Cardiac septum (tissue), 1 donor: ENCODE measurements at regions of chr4 and their contacts with region 1.

Region 1: GRCh38 chr4:139919521-139919920 is 234.5 kb downstream of the MAML3 start:
- DNase-seq: no peak

Region 2: GRCh38 chr4:139330283-139330682 is 589.2 kb before region 1 on chr4:
- intact Hi-C with region 1: no loop called
- DNase-seq: no peak

Region 3: DNA sequence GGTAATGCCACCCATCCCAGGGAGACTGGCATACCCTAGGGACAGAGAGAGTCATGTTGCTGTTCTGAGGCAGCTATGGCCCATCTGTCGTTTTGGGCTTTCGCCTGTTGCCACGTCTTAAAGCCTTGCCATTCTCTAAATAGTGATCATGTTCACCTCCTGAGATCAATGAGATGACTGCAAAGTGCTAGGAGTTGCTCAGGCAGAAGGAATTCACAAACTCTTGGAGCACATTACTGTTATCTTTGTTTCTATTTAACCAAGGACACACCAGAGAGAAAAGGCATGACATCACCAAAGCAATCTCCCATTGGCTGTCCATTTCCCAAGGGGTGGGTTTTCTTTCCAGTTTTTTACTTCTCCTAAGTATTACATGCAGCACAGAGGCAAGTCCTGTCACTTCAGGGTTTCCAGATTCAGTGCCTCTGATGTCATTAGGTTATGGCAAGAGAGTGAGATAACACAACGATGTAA is 326.4 kb before region 1 on chr4:
- intact Hi-C with region 1: no loop called
- DNase-seq: no peak

Region 4: GRCh38 chr4:139815778-139816601 is 103.5 kb before region 1 on chr4:
- intact Hi-C with region 1: loop called (anchors 5 kb)
- DNase-seq: no peak

Region 5: DNA sequence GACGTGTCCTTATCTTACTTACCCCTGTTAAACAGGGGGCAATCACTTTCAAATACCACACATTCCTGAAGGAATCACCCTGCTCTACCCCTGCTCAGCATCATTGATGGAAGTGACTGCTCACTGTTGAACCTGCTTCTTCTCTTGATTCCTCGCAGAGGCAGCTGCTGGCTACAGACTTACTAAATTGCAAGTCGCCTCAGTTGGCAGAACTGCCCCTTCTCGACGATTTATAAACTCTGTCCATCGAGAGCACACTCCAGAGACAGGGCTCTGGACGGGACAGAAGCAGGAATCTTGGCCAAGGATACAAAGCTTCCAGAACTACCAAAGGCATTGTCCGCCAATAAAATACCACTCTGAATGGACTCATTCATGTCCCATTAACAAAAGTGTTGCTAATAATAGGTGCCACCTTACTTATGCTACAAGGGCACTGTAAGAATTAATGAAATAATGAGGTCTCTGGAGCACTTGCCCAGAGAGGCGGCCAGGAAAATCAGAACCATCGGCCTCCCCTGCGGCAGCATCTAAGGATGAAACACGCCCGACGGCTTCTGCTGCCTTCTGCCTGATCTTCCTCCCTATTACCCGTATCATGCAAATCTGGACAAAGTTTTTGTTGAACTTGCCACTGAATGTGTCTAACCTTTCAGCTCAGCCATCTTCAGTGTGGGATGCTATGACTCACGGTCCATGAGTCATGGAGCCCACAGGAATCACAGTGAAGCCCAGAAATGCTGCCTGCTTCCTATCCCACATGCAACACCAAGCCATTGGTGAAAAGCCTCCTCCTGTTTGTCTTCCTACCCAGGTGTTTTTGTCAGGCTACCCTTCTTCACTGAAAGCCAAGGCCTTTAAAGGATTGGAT is 69.6 kb after region 1 on chr4:
- intact Hi-C with region 1: loop called (anchors 5 kb)
- DNase-seq: no peak

Region 6: GRCh38 chr4:140004549-140004895 is 85.0 kb after region 1 on chr4:
- intact Hi-C with region 1: no loop called
- DNase-seq: peak; percentile 82

Region 7: DNA sequence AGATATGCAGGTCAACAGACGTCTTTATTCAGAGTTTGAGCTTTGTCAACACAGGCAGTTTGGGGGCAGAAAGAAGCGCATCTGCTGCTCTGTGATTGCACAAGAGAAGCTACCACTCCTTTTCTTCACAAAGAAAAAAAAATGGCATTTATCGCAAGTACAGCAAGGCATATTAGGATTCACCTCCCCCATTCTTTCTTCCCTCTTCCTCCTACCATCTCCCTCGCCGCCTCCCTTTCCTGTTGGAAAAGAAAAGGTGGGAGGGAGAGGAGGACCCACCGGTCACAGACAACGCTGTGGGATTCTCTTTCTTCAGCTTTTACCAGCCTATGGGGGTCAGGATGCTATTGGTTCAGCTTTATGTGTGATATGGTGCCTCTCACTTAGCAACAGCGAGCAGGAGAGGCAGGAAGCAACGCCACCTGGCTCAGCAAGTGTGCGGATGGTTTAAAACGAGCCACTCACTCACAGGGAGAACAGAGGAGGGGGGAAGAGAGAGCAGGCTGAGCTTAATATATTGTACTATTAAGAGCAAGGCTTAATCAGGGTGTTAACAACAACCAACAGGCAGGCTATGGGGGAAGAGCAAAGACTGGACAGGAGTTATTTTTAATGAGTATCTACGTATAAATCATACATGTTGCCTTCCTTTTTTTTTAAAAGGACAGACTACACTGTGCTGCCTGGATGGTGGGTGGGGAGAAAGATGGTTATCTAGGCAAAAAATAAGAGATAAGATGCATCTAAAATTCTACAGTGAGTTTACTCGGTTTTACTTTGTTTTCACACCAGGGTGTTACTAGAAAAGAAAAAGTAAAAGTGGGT is 129.7 kb after region 1 on chr4:
- intact Hi-C with region 1: loop called (anchors 5 kb)
- DNase-seq: peak; percentile 79

Region 8: DNA sequence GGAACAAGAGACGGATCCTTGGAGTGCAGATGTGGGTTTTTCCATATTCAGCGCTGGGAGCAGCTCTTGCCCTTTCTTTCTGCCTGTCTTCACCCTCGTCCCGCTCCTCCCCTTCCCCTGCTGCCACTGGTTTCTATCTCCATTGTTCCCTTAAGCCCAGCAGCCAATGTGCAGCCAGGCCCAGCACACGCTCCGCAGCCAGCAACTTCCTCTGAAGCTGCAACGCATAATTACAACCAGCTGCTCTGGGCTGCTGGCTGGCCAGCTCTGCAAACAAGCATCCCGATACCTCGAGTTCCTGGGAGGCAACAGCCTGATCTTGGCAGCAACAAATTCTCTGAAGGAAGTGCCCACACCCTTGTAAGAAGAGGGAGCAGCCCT is 318.1 kb after region 1 on chr4:
- intact Hi-C with region 1: loop called (anchors 5 kb)
- DNase-seq: peak; percentile 85